Activated CD4-positive, alpha-beta memory T cell treated with anti-CD3 and anti-CD28 coated beads for 36 hours (primary cell): ENCODE measurements at regions of chr22 and their contacts with region 1.

Region 1: DNA sequence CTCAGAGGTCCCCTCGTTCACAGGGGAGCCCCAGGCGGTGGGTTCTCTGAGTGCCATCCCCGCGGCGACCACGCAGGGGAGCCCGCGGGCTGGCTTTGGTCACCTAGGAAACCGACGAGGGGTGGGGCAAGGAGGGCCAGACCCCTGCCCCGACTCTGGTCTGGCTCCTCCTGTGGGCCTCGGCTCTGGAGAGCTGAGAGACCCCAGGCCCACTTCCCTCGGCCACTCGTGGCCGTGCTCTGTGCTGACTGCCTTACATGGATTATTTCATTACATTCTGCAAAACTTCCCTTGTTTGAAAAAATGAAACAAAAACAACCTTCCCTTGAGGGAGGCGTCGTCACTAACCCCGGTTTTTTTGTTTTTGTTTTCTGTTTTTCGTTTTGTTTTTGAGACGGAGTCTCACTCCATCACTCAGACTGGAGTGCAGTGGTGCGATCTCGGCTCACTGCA is 15.1 kb upstream of the CYTH4 start:
- DNase-seq: peak; percentile 81
- H3K4me3 Mint-ChIP-seq: peak overlapping the region; percentile 86
- H3K27ac Mint-ChIP-seq: peak overlapping the region; percentile 92
- H3K4me1 Mint-ChIP-seq: peaks cover 34% of the 10 kb centered on the region
- H3K27me3 Mint-ChIP-seq: no peaks in the 10 kb centered on the region

Region 2: GRCh38 chr22:37282385-37282677 is 15.2 kb after region 1 on chr22 and contains the start of gene CYTH4:
- CTCF ChIA-PET with region 1: interaction called, 7 read pairs
- POLR2A ChIA-PET with region 1: interaction called, 13 read pairs
- intact Hi-C with region 1: loop called (anchors 2 kb)
- DNase-seq: peak; percentile 89
- H3K4me3 Mint-ChIP-seq: peak within 1 kb of the TSS; percentile 82
- H3K27ac Mint-ChIP-seq: peak within 1 kb of the TSS; percentile 94
- H3K4me1 Mint-ChIP-seq: peaks cover 48% of the 10 kb centered on the region
- H3K27me3 Mint-ChIP-seq: peaks cover 2% of the 10 kb centered on the region
- total RNA-seq, gene CYTH4: 58.7 to 60.5 TPM

Region 3: DNA sequence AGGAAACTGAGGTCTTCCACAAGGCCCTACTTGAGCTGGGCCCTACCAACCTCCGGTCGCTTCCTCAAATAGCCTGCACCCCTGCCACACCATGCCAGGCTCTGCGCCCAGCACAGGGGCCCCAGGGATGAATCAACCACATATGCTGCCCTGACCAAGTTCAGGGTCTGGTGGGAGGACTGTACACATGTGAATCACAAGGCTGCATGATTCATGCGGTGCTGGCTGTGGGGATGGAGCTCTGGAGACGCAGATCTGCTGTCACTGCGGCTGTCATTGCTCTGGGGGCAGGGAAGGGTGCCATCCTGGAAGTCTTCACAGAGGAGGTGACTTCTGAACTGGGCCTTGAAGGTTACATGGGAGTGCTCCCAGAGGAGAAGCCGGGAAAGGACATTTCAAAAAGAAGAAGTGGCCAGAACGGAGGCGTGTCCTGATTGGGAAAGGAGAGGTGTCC is 36.7 kb after region 1 on chr22:
- CTCF ChIA-PET with region 1: interaction called, 11 read pairs
- POLR2A ChIA-PET with region 1: interaction called, 3 read pairs
- intact Hi-C with region 1: no loop called
- DNase-seq: peak; percentile 90
- H3K4me3 Mint-ChIP-seq: no peak overlapping the region
- H3K27ac Mint-ChIP-seq: peak overlapping the region; percentile 91
- H3K4me1 Mint-ChIP-seq: peaks cover 89% of the 10 kb centered on the region
- H3K27me3 Mint-ChIP-seq: no peaks in the 10 kb centered on the region

Region 4: DNA sequence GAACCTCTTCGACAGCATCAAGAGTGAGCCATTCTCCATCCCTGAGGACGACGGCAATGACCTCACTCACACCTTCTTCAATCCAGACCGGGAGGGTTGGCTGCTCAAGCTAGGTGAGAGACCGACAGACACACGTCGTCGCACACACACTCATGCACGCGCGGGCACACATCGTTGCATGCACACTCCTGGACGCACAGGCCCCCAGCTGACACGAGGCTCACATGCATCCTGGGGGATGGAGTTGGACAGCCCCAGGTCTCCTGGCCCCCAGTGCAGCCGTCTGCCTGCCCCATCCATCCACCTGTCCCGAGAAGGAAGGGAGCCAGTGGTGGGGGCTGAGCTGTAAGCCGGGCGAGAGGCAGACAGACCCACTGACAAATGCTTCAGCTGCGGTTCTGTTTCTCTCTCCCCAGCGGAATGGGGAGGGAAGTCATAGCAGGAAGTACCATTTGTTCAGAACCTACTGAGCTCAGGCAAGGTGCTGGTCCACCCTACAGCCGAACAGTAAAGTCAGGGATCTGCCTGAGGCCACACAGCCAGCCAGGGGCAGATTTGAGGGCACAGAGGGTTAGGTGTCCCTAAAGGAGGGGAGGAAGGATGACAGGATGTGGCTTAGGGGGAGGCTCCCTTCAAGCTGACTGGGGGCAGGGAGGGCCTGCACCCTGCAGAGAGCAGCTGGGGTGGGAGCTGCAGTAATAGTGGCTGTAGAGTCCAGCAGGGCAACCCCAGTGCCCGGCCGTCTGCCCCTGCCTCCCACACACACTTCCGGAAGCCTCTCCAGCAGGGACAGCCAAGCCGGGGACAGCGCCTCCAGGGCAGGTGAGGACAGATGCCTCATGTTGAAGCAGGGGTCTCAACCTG is 42.3 kb after region 1 on chr22:
- CTCF ChIA-PET with region 1: interaction called, 12 read pairs
- POLR2A ChIA-PET with region 1: interaction called, 3 read pairs
- intact Hi-C with region 1: loop called (anchors 1 kb)
- DNase-seq: peak; percentile 73
- H3K4me3 Mint-ChIP-seq: no peak overlapping the region
- H3K27ac Mint-ChIP-seq: peak overlapping the region; percentile 59
- H3K4me1 Mint-ChIP-seq: peaks cover 84% of the 10 kb centered on the region
- H3K27me3 Mint-ChIP-seq: no peaks in the 10 kb centered on the region

Region 5: GRCh38 chr22:37362621-37363020 is 95.5 kb after region 1 on chr22:
- CTCF ChIA-PET with region 1: no interaction called
- POLR2A ChIA-PET with region 1: no interaction called
- intact Hi-C with region 1: no loop called
- DNase-seq: no peak
- H3K4me3 Mint-ChIP-seq: no peak overlapping the region
- H3K27ac Mint-ChIP-seq: no peak overlapping the region
- H3K4me1 Mint-ChIP-seq: no peaks in the 10 kb centered on the region
- H3K27me3 Mint-ChIP-seq: no peaks in the 10 kb centered on the region